Activated CD4-positive, alpha-beta T cell treated with anti-CD3 and anti-CD28 coated beads, Interleukin-2, amount 10 ng/mL, durations not matched to agents 7 days and 5 days (primary cell): ENCODE measurements at regions of chr10 and their contacts with region 1.

Region 1: DNA sequence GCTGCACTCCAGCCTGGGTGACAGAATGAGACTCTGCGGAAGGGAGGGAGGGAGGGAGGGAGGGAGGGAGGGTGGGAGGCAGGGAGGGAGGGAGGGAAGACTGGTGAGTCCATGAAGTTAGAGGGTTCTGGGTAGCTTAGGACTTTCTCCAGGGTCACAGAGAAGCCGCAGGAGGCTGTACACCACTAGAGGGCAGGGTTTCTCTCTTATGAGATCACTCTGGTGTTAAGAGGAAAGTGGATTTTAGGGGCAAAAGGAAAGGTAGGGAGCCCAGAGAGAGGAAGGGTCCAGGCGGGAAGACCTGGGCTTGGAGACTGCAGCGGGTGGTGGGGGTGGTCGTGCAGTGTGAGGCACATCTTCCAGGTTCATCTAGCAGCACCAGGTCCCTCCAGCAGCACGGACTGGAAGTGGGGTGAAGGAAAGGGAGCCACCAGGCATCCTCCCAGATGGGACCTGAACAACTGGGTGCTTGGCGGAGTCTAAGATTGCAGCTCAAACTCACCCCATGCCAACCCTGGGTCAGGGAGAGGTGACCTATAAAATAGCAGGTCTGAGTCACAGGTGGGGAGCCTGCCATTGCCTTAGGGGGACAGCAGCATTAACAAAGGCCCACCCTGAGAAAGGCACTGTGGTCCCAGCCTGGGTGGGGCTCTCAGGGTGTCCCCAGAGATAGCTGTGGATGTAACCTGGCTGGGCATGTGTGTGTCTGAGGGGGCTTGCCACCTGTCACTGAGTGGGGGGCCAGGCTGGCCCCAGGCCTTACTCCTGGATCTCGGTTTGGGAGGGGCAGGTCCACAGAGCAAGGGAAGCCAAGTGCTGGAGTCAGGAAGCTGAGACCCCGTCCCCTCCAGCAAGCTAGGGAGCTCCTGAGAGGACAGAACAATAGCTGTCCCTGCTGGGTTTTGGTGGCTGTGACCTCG is 48.5 kb upstream of the SLC29A3 start:
- DNase-seq: peak; percentile 56
- H3K4me3 Mint-ChIP-seq: no peak overlapping the region
- H3K27ac Mint-ChIP-seq: no peak overlapping the region
- H3K4me1 Mint-ChIP-seq: peaks cover 6% of the 10 kb centered on the region
- H3K27me3 Mint-ChIP-seq: peaks cover 2% of the 10 kb centered on the region

Region 2: GRCh38 chr10:71285180-71285545 is 14.6 kb after region 1 on chr10:
- CTCF ChIA-PET with region 1: interaction called, 13 read pairs
- POLR2A ChIA-PET with region 1: no interaction called
- DNase-seq: peak; percentile 31
- H3K4me3 Mint-ChIP-seq: no peak overlapping the region
- H3K27ac Mint-ChIP-seq: no peak overlapping the region
- H3K4me1 Mint-ChIP-seq: no peaks in the 10 kb centered on the region
- H3K27me3 Mint-ChIP-seq: no peaks in the 10 kb centered on the region

Region 3: DNA sequence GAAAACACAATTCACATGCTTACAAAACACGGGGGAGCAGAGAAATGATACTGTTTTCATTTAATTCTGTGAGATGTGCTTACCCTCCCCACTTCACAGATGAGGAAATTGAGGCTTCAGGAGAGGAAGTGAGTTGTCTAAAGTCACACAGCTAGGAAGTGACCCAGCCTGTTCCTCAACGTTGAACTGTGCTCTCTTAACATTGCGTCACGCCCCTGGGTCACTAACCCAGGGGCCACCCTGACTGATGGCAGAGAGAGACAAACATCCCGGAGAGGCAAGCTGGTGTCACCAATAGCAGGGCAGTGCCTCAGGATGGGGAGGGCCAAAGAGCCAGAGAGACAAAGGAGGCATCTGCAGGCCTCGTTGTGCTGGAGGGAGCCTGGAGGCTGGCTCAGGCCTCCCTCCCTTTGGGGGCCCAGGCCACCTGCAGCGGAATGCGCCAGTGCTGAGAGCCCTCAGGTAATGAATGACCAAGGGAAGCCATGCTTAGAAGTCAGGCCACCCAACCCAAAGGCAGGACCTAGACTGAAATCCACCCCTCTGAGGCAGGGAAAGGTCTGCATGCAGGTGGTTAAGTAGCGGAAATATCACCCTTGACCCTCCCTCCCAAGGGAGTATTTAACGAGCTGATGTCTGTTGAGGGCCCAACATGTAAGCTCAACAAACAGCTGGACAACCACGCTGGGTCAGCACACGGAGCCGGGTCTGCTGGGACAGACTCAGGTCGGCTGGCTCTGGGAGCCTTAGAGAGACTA is 367.7 kb after region 1 on chr10:
- CTCF ChIA-PET with region 1: no interaction called
- POLR2A ChIA-PET with region 1: no interaction called
- DNase-seq: no peak
- H3K4me3 Mint-ChIP-seq: no peak overlapping the region
- H3K27ac Mint-ChIP-seq: no peak overlapping the region
- H3K4me1 Mint-ChIP-seq: peaks cover 6% of the 10 kb centered on the region
- H3K27me3 Mint-ChIP-seq: no peaks in the 10 kb centered on the region